Thyroid gland (tissue), 4 donors: ENCODE measurements at regions of chr21 and their contacts with region 1.

Region 1: DNA sequence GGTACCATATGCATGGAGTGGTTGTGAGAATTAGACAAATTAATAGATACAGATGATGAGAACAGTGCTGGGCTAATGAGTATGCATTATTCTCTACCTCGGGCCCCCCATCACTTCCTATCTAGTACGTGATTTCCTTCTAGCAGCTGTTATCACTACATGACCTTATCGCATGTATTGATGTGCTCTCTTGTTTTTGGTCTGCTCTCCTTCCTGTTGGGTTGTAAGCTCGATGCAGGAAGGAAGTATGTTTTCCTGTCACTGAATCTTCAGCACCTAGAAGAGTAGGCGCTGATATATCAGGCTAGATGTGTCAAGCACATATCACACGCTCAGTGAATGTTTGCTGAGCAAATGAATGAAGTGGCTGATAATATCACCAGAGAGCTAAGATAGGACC is 43.9 kb upstream of the IFNAR2 start:
- DNase-seq: no peak
- H3K4me3 ChIP-seq: no peak overlapping the region
- H3K27ac ChIP-seq: no peak overlapping the region
- H3K4me1 ChIP-seq: peaks cover 0 to 25% of the 10 kb centered on the region in 2 donors
- H3K27me3 ChIP-seq: no peaks in the 10 kb centered on the region
- CTCF ChIP-seq: no peak
- POLR2A ChIP-seq: no peak

Region 2: GRCh38 chr21:32834916-32835235 is 351.0 kb before region 1 on chr21:
- intact Hi-C with region 1: loop called (anchors 10 kb)
- DNase-seq: no peak
- H3K4me3 ChIP-seq: no peak overlapping the region
- H3K27ac ChIP-seq: no peak overlapping the region
- H3K4me1 ChIP-seq: no peaks in the 10 kb centered on the region
- H3K27me3 ChIP-seq: no peaks in the 10 kb centered on the region
- CTCF ChIP-seq: no peak
- POLR2A ChIP-seq: no peak

Region 3: DNA sequence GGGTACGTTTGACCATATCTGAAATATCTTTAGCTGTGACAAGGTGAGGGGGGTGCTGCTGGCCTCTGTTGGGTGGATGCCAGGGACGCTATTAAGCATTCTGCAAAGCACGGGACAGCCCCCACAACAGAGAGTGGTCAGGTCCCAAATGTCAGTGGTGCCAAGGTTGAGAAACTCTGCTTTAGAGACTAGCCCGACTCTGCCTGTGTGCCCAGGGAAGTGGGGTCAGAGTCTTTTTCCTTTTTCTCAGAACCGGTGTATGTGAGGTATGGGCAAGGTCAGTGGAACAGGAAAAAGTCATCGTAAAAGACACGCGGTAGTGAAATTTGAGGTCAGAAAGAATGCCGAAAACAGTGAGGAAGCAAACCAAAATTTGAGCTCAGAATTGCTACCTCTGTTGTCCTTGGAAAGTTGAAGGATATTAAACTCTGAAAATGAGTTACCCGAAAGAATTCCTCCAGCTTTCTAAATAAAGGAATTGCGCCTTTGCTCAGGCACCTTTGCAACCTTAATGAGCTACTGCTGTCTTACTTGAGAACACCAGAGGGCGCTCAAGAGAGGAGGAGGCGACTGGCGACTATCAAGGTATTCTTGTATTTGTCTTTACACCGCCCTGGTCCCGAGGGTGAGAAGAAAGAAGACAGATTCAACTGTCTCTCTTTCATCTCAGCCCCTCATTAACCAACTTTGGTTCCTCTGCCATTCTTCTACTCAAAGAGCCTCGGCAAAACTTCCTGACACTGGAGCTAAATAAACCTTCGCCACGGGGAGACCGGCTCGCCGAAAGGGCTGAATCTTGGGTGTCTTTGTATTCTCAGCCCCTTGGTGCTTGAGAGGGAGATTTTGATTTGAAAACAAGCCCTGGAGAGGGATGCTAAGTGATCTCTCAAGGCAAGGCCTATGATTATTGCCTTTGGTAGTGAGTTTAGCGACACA is 245.5 kb before region 1 on chr21:
- intact Hi-C with region 1: loop called (anchors 5 kb)
- DNase-seq: peak; percentile 37 to 50
- H3K4me3 ChIP-seq: no peak overlapping the region
- H3K27ac ChIP-seq: no peak overlapping the region
- H3K4me1 ChIP-seq: no peaks in the 10 kb centered on the region
- H3K27me3 ChIP-seq: no peaks in the 10 kb centered on the region
- CTCF ChIP-seq: peak; percentile 52 to 78 (median 68)
- POLR2A ChIP-seq: no peak

Region 4: DNA sequence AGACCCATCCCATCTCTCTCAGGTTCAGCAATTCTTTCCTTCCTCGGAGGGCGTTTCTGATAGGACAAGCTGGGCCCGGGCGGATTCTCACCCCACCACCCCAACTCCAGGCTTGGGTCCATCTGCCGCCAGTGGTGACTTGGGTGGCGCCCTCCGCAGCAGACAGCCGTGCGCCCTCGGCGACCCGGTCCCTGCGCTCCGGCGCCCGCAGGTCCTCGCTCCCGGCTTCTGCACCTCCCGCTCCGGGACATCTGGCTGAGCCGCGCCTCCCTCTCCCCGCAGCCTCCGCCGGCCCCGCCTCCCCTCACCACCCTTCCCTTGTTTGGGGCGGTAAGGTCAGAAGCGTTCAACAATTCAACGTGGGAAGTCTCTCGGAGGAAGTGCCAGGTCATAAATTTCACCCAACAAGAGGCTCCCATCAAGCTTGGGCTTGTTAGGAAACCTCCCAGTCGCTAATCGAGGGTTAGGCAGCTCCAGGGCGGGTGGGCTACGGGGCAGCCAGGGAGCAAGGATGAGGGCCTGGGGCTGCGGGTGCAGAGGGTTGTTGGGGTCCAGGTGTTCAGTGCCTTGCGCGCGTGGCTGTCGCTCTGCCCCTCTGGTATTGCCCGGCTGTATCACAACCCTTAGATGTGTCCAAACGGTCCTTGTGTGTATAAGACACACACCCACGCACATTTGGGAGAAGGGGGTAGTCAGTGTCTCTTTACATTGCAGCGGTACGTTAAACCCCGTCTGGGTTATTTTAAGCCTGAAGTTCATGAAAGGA is 76.1 kb before region 1 on chr21:
- intact Hi-C with region 1: no loop called
- DNase-seq: no peak
- H3K4me3 ChIP-seq: no peak overlapping the region
- H3K27ac ChIP-seq: no peak overlapping the region
- H3K4me1 ChIP-seq: peaks cover 0 to 3% of the 10 kb centered on the region in 2 donors
- H3K27me3 ChIP-seq: peaks cover 18% of the 10 kb centered on the region
- CTCF ChIP-seq: no peak
- POLR2A ChIP-seq: no peak

Region 5: DNA sequence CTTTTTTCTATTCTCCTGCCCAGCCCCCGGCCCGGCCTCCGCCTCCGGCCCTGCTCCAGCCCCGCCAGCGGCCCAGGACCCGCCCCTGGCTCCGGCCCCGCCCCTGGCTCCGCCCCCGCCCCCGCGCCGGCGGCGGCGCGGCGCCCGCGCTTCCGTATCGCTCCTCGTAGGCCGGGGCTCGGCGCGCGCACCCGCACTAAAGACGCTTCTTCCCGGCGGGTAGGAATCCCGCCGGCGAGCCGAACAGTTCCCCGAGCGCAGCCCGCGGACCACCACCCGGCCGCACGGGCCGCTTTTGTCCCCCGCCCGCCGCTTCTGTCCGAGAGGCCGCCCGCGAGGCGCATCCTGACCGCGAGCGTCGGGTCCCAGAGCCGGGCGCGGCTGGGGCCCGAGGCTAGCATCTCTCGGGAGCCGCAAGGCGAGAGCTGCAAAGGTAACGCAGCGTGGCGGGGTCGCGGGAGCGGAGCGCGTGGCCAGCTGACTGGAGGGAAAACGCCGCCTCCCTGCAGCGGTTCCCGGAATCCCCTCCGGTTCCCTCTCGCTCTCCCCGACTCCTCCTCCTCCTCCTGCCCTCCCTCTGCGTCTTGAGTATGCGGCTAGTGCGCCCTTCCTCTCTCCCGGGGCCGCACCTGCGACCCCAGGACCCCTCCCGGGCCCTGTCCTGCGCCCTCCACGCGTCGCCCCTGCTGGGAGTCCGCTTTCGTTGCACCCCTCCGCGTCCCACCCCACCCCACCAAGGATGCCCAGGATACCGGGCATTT is 44.1 kb after region 1 on chr21 and contains the start of gene IFNAR2:
- intact Hi-C with region 1: no loop called
- DNase-seq: peak; percentile 68 to 69
- H3K4me3 ChIP-seq: peak within 1 kb of the TSS; percentile 76 to 98 (median 81)
- H3K27ac ChIP-seq: peak within 1 kb of the TSS; percentile 78 to 92 (median 86)
- H3K4me1 ChIP-seq: peaks cover 4 to 9% of the 10 kb centered on the region in 2 donors
- H3K27me3 ChIP-seq: no peaks in the 10 kb centered on the region
- CTCF ChIP-seq: no peak
- POLR2A ChIP-seq: peak in 1 of 2 donors; percentile 70
- total RNA-seq, gene IFNAR2: 6.6 to 11.0 (median 7.8) TPM